Activated CD4-positive, alpha-beta memory T cell treated with anti-CD3 and anti-CD28 coated beads, Interleukin-2, amount 10 ng/mL, durations not matched to agents 7 days and 5 days (primary cell): ENCODE measurements at regions of chr9 and their contacts with region 1.

Region 1: GRCh38 chr9:90112788-90113187 is 508.0 kb downstream of the GADD45G start:
- DNase-seq: no peak
- H3K4me3 Mint-ChIP-seq: no peak overlapping the region
- H3K27ac Mint-ChIP-seq: no peak overlapping the region
- H3K4me1 Mint-ChIP-seq: no peaks in the 10 kb centered on the region
- H3K27me3 Mint-ChIP-seq: peaks cover 24% of the 10 kb centered on the region

Region 2: DNA sequence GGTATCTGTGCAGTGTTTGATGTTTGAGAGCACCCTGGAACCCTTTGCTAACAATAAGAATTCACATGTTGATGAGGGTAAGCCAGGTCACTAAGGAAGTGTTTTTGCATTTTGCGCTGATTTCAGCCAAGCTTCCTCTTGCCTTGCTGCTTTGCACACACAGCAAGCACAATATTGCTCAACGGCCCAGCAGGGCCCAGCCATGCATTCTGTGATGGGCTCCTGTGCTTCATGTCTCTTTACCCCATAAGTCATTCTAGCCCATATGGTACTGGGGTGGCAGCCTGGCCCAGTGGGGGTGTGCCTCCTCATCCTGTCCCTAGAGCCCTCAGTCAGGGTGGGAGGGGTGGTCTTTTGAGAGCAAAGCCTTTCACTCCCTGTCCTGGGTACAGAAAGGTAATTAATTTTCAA is 26.7 kb before region 1 on chr9:
- CTCF ChIA-PET with region 1: no interaction called
- POLR2A ChIA-PET with region 1: no interaction called
- DNase-seq: no peak
- H3K4me3 Mint-ChIP-seq: no peak overlapping the region
- H3K27ac Mint-ChIP-seq: no peak overlapping the region
- H3K4me1 Mint-ChIP-seq: no peaks in the 10 kb centered on the region
- H3K27me3 Mint-ChIP-seq: peaks cover 29% of the 10 kb centered on the region

Region 3: DNA sequence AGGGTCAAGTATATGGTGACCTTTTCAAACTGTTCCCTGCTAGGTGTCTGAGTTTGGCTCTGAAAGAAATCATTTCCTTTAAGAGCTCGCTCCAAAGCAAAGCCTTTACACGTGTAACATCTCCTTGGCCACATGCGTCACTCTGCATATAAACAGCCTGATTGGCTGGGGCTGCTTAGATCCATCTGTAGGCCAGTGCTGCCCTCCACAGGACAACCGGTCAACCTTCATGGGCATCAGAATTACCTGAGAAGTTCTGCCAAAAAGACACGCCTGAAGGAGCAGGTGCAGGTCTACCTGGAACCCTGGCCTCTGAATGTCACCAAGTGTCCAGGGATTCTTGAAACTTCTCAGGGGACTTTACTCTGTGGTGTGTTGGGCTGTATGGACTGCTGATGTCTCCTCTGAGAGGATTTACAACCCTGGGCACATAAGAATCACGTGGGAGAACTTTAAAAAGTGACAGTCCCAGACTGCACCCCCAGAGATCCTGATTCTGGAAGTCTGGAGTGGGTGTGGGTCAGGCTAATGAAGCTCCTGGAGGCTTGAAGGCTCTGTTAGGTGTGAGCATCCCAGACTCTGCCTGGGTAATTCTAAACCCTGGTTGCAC is 10.4 kb before region 1 on chr9:
- CTCF ChIA-PET with region 1: interaction called, 10 read pairs
- POLR2A ChIA-PET with region 1: no interaction called
- DNase-seq: peak; percentile 84
- H3K4me3 Mint-ChIP-seq: no peak overlapping the region
- H3K27ac Mint-ChIP-seq: no peak overlapping the region
- H3K4me1 Mint-ChIP-seq: peaks cover 14% of the 10 kb centered on the region
- H3K27me3 Mint-ChIP-seq: peaks cover 2% of the 10 kb centered on the region